ENCODE measurements at regions of chr15 and their contacts with region 1.

Region 1: DNA sequence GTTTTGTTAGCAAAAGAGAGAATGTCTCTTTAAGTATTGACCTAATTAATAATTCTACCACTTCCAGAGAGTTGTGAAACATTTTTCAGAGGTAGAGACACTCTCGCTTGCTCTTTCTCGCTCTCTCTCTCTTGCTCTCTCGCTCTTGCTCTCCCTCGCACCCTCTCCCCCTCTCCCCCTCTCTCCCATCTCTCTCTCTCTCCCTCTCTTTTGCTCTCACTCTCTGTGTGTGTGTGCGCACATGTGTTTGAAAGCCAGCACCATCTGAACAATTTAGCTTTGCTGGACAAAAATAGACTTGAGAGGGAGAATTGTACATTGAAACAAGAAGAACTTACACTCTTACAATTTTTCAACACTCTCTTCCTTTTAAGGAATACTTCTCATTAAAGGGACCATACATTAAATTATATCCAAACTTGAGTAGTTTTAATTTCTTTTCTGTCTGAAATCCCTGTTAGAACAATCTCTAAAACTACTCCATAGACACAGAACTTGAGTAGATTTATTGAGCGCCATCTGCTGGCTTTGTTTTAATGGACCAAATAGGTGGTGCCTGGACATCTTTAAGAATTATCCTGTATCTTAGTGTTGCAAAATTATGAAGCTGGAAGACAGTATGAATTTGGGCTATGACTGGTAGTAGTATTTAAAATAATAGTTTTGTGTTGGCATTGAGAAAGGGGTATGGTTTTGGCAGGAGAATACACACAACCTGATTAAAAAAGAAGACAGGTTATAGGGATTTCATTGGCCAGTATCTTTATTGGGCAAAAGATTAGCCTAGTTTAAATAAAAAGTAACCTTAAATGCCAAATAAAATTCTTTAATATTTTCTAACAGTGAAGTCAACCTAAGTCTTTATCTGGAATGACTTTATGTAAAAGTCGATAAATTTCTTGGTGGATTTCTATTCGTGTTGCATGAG is 124.6 kb downstream of the AKAP13 start:
- DNase-seq: peak; percentile 38
- H3K4me3 Mint-ChIP-seq: no peak overlapping the region
- H3K27ac Mint-ChIP-seq: no peak overlapping the region
- H3K4me1 Mint-ChIP-seq: peaks cover 68% of the 10 kb centered on the region
- H3K27me3 Mint-ChIP-seq: no peaks in the 10 kb centered on the region

Region 2: GRCh38 chr15:85296615-85297402 is 208.2 kb before region 1 on chr15:
- CTCF ChIA-PET with region 1: interaction called, 55 read pairs
- POLR2A ChIA-PET with region 1: no interaction called
- intact Hi-C with region 1: loop called (anchors 1 kb)
- DNase-seq: peak; percentile 77
- H3K4me3 Mint-ChIP-seq: peak overlapping the region; percentile 52
- H3K27ac Mint-ChIP-seq: no peak overlapping the region
- H3K4me1 Mint-ChIP-seq: peaks cover 12% of the 10 kb centered on the region
- H3K27me3 Mint-ChIP-seq: no peaks in the 10 kb centered on the region

Region 3: DNA sequence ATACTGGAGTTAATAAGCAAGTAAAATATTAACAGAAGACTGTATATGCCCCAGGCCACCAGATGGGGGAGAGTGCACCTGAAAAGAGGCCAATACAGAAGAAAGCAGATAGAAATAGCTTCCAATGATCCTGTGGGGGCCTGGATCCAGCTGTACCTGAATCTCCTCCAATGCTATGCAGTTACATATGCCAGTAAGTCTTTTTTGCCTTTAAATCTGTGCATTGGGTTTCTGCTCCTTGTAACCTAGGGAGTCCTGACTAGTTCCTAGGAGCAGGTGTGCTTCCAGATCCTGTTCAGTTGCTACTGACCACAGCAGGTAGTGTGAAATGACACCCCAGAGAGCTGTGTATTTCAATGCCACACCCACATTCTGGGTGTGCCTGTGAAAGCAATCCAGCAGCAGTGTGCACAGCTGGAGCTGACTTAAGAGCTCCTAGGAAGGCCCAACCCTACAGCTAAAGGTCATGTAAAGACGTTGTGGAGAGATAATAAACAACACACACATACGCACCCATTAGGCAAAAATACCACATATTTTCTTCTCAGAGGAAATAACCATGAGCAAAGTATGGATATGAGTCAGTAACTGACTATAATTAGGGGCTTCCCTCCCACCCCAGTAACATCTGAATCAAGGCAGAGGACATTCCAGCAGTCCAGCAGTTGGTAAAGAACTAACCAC is 186.8 kb before region 1 on chr15:
- CTCF ChIA-PET with region 1: interaction called, 11 read pairs
- POLR2A ChIA-PET with region 1: no interaction called
- intact Hi-C with region 1: no loop called
- DNase-seq: peak; percentile 50
- H3K4me3 Mint-ChIP-seq: no peak overlapping the region
- H3K27ac Mint-ChIP-seq: peak overlapping the region; percentile 28
- H3K4me1 Mint-ChIP-seq: peaks cover 49% of the 10 kb centered on the region
- H3K27me3 Mint-ChIP-seq: no peaks in the 10 kb centered on the region

Region 4: DNA sequence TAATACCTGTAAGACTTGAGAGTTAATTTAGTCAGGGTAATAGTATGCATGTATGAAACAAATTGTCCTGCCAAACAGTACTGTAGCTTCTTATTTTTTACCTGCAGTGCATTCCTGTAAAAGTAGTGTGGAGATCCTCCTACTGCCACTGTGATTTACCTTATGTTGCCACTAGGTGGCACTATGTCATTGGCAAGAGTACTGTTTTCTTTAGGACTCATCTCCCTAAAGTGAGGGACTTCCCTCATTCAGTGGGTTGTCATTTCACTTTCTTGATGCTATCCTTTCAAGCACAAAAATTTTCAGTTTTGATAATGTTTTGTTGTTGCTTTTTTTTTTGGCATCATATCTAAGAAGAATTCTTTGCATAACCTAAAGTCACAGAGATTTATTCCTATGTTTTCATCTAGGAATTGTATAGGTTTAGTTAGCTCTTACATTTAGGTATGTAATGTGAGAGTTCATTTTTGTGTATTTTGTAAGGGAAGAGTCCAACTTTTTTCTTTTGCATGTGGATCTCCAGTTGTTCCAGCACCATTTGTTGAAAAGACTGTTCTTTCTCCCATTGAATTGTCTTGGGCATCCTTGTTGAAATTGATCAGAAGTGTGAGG is 19.0 kb before region 1 on chr15:
- CTCF ChIA-PET with region 1: interaction called, 43 read pairs
- POLR2A ChIA-PET with region 1: interaction called, 5 read pairs
- intact Hi-C with region 1: no loop called
- DNase-seq: peak; percentile 41
- H3K4me3 Mint-ChIP-seq: no peak overlapping the region
- H3K27ac Mint-ChIP-seq: peak overlapping the region; percentile 32
- H3K4me1 Mint-ChIP-seq: peaks cover 69% of the 10 kb centered on the region
- H3K27me3 Mint-ChIP-seq: no peaks in the 10 kb centered on the region

Region 5: GRCh38 chr15:85494048-85494793 is 10.8 kb before region 1 on chr15:
- CTCF ChIA-PET with region 1: interaction called, 43 read pairs
- POLR2A ChIA-PET with region 1: interaction called, 5 read pairs
- intact Hi-C with region 1: no loop called
- DNase-seq: no peak
- H3K4me3 Mint-ChIP-seq: no peak overlapping the region
- H3K27ac Mint-ChIP-seq: no peak overlapping the region
- H3K4me1 Mint-ChIP-seq: peaks cover 75% of the 10 kb centered on the region
- H3K27me3 Mint-ChIP-seq: no peaks in the 10 kb centered on the region

Region 6: DNA sequence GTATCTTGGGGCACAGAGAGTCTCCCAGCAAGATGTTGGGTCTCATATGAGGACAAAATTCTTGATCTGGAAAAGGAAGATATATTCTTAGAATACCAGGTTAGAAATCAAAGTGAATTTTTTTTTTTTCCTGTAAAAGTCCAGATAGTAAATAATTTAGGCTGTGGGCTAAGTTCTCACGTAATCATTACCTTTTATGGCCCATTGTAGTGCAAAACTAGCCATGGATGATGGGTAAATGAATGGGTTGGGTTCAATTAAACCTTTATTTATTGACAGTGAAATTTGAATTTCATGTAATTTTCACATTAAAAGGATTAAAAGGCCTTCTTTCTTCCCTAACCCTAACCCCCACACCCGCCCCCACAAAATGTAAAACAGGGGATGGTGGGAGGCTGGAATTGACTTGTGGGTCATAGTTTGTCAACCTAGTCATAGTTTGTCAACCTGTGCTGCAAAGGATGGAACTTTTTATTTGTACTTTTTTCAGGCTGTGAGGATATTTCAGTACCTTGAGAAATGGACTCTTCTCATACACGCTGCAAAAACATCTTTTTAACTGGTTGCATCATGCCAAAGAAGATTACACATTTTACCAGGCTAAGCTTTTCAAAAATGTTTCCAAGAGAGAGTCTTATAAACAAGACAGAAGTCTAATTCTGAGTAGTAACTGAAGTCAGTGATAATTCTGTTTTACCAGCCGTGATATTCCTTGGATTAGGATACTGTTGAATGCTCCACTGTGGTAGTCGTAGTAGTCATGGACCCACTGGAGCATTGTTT is 14.2 kb after region 1 on chr15:
- CTCF ChIA-PET with region 1: interaction called, 4 read pairs
- POLR2A ChIA-PET with region 1: interaction called, 3 read pairs
- intact Hi-C with region 1: loop called (anchors 2 kb)
- DNase-seq: no peak
- H3K4me3 Mint-ChIP-seq: no peak overlapping the region
- H3K27ac Mint-ChIP-seq: peak overlapping the region; percentile 35
- H3K4me1 Mint-ChIP-seq: peaks cover 45% of the 10 kb centered on the region
- H3K27me3 Mint-ChIP-seq: no peaks in the 10 kb centered on the region

Region 7: GRCh38 chr15:85607842-85608241 is 102.8 kb after region 1 on chr15:
- CTCF ChIA-PET with region 1: no interaction called
- POLR2A ChIA-PET with region 1: no interaction called
- intact Hi-C with region 1: no loop called
- DNase-seq: no peak
- H3K4me3 Mint-ChIP-seq: no peak overlapping the region
- H3K27ac Mint-ChIP-seq: no peak overlapping the region
- H3K4me1 Mint-ChIP-seq: peaks cover 27% of the 10 kb centered on the region
- H3K27me3 Mint-ChIP-seq: no peaks in the 10 kb centered on the region